Heart left ventricle (tissue), 16 donors: ENCODE measurements at regions of chr12 and their contacts with region 1.

Region 1: DNA sequence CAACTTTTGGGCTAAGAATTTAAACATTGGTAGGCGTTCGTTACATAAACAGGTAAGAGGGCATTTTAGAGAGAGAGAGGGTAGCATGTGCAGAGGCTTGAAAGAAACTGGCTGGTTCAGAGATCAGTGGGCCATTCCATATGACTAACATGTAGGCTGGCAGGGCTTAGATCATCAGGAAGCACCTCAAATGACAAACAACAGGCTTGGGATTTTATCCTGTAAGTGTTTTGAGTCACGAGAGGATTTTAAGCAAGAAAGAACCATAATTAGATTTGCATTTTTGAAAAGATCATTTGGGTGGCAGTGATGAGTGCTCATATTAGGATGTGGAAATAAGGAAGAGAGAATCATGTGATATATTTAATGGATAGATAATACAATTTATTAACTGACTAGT is 8.7 kb upstream of the PLEKHA5 start:
- DNase-seq: no peak
- ATAC-seq: no peak
- H3K4me3 ChIP-seq: no peak overlapping the region
- H3K27ac ChIP-seq: no peak overlapping the region
- H3K4me1 ChIP-seq: peaks cover 0 to 6% (median 0%) of the 10 kb centered on the region in 12 donors
- H3K27me3 ChIP-seq: no peaks in the 10 kb centered on the region
- CTCF ChIP-seq: no peak
- POLR2A ChIP-seq: no peak

Region 2: GRCh38 chr12:18824287-18824686 is 296.5 kb before region 1 on chr12:
- intact Hi-C with region 1: no loop called
- DNase-seq: no peak
- ATAC-seq: no peak
- H3K4me3 ChIP-seq: no peak overlapping the region
- H3K27ac ChIP-seq: no peak overlapping the region
- H3K4me1 ChIP-seq: no peaks in the 10 kb centered on the region
- H3K27me3 ChIP-seq: no peaks in the 10 kb centered on the region
- CTCF ChIP-seq: no peak
- POLR2A ChIP-seq: no peak

Region 3: DNA sequence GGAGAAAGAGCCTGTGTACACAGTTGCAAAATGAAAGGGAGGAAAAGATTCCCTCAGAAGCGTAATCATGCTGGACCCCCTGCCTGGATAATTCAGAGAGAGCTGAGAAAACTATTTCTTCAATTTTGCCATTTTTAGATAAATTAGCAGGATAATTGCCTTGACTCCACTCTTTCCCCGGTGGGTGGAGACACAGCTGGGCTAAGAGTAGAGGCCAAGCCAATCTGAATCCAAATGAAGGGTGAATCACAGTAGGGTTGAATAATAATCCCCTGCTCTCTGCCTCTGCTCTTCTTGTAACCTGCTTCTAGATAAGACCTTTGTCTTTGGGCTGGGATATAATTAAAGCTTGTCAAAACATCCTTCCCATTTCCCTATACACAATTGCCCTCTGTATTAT is 232.7 kb before region 1 on chr12:
- intact Hi-C with region 1: loop called in 2 of 10 experiments (anchors 5 to 10 kb)
- DNase-seq: peak in 1 of 5 donors; percentile 33
- ATAC-seq: peak in 3 of 4 donors; percentile 49 to 76 (median 73)
- H3K4me3 ChIP-seq: no peak overlapping the region
- H3K27ac ChIP-seq: peak overlapping the region in 2 of 12 donors; percentile 28 to 40
- H3K4me1 ChIP-seq: peaks cover 0 to 13% (median 0%) of the 10 kb centered on the region in 12 donors
- H3K27me3 ChIP-seq: no peaks in the 10 kb centered on the region
- CTCF ChIP-seq: no peak
- POLR2A ChIP-seq: no peak